ENCODE measurements at regions of chr3 and their contacts with region 1.

Region 1: GRCh38 chr3:137692803-137693431 is 71.2 kb upstream of the SOX14 start:
- DNase-seq: peak; percentile 31
- ATAC-seq: peak; percentile 93
- H3K4me3 ChIP-seq: no peak overlapping the region
- H3K27ac ChIP-seq: no peak overlapping the region
- H3K4me1 ChIP-seq: no peaks in the 10 kb centered on the region
- H3K27me3 ChIP-seq: no peaks in the 10 kb centered on the region
- CTCF ChIP-seq: peak; percentile 82
- EP300 ChIP-seq: no peak
- POLR2A ChIP-seq: no peak
- RAD21 ChIP-seq: peak; percentile 55; the same call in 1 of the 2 replicates

Region 2: GRCh38 chr3:137105277-137105977 is 587.5 kb before region 1 on chr3:
- CTCF ChIA-PET with region 1: interaction called, 5 read pairs
- POLR2A ChIA-PET with region 1: no interaction called
- in situ Hi-C with region 1: loop called (anchors 10 kb)
- intact Hi-C with region 1: loop called (anchors 2 kb)
- DNase-seq: peak; percentile 41
- ATAC-seq: peak; percentile 65; the same call in 2 of the 3 replicates
- H3K4me3 ChIP-seq: no peak overlapping the region
- H3K27ac ChIP-seq: no peak overlapping the region
- H3K4me1 ChIP-seq: no peaks in the 10 kb centered on the region
- H3K27me3 ChIP-seq: no peaks in the 10 kb centered on the region
- CTCF ChIP-seq: peak; percentile 69
- EP300 ChIP-seq: no peak
- POLR2A ChIP-seq: no peak
- RAD21 ChIP-seq: peak; percentile 33; the same call in 1 of the 2 replicates

Region 3: DNA sequence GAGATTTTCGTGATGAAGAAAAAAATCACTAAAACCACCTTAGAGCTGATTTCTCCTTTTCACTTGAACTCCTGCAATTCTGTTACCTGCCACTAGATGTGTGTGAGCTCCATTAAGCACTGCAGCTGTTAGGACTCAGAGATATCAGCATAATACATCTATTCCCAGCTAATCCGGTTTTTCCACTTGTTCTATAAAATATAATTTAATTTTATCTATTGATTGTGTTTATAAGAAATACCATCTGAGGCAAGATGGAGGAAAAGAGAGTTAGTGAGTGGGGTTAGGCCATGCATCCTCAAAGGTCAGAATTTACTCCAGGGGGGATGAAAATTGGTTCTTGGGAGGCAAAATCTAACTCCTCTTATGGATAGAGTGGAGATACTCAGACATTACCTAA is 582.4 kb before region 1 on chr3:
- CTCF ChIA-PET with region 1: interaction called, 5 read pairs
- POLR2A ChIA-PET with region 1: no interaction called
- in situ Hi-C with region 1: loop called (anchors 10 kb)
- intact Hi-C with region 1: loop called (anchors 2 kb)
- DNase-seq: peak; percentile 17
- ATAC-seq: peak; percentile 66
- H3K4me3 ChIP-seq: no peak overlapping the region
- H3K27ac ChIP-seq: no peak overlapping the region
- H3K4me1 ChIP-seq: no peaks in the 10 kb centered on the region
- H3K27me3 ChIP-seq: no peaks in the 10 kb centered on the region
- CTCF ChIP-seq: peak; percentile 45
- EP300 ChIP-seq: no peak
- POLR2A ChIP-seq: no peak
- RAD21 ChIP-seq: no peak

Region 4: GRCh38 chr3:137217733-137218132 is 475.2 kb before region 1 on chr3:
- CTCF ChIA-PET with region 1: no interaction called
- POLR2A ChIA-PET with region 1: no interaction called
- in situ Hi-C with region 1: loop called (anchors 10 kb)
- intact Hi-C with region 1: loop called (anchors 2 kb)
- DNase-seq: no peak
- ATAC-seq: 0 out of 3 replicates have a peak, but pooled peaks have one; percentile 27
- H3K4me3 ChIP-seq: no peak overlapping the region
- H3K27ac ChIP-seq: no peak overlapping the region
- H3K4me1 ChIP-seq: no peaks in the 10 kb centered on the region
- H3K27me3 ChIP-seq: no peaks in the 10 kb centered on the region
- CTCF ChIP-seq: peak; percentile 45
- EP300 ChIP-seq: no peak
- POLR2A ChIP-seq: no peak
- RAD21 ChIP-seq: no peak

Region 5: GRCh38 chr3:137222736-137223225 is 470.1 kb before region 1 on chr3:
- CTCF ChIA-PET with region 1: no interaction called
- POLR2A ChIA-PET with region 1: no interaction called
- in situ Hi-C with region 1: loop called (anchors 10 kb)
- intact Hi-C with region 1: loop called (anchors 2 kb)
- DNase-seq: no peak
- ATAC-seq: no peak
- H3K4me3 ChIP-seq: no peak overlapping the region
- H3K27ac ChIP-seq: no peak overlapping the region
- H3K4me1 ChIP-seq: no peaks in the 10 kb centered on the region
- H3K27me3 ChIP-seq: no peaks in the 10 kb centered on the region
- CTCF ChIP-seq: no peak
- EP300 ChIP-seq: no peak
- POLR2A ChIP-seq: no peak
- RAD21 ChIP-seq: no peak

Region 6: GRCh38 chr3:137409584-137409983 is 283.3 kb before region 1 on chr3:
- CTCF ChIA-PET with region 1: no interaction called
- POLR2A ChIA-PET with region 1: no interaction called
- in situ Hi-C with region 1: no loop called
- intact Hi-C with region 1: loop called (anchors 2 kb)
- DNase-seq: no peak
- ATAC-seq: no peak
- H3K4me3 ChIP-seq: no peak overlapping the region
- H3K27ac ChIP-seq: no peak overlapping the region
- H3K4me1 ChIP-seq: no peaks in the 10 kb centered on the region
- H3K27me3 ChIP-seq: no peaks in the 10 kb centered on the region
- CTCF ChIP-seq: no peak
- EP300 ChIP-seq: no peak
- POLR2A ChIP-seq: no peak
- RAD21 ChIP-seq: no peak

Measured in HepG2 (cell line).